B cell (primary cell): ENCODE measurements at regions of chr11 and their contacts with region 1.

Region 1: GRCh38 chr11:64787526-64788320 is 9.4 kb upstream of the SF1 start:
- DNase-seq: peak; percentile 73
- ATAC-seq: peak; percentile 83
- H3K4me3 ChIP-seq: no peak overlapping the region
- H3K4me3 Mint-ChIP-seq: no peak overlapping the region
- H3K27ac ChIP-seq: peak overlapping the region; percentile 25 to 56
- H3K27ac Mint-ChIP-seq: peak overlapping the region; percentile 81
- H3K4me1 ChIP-seq: peaks cover 12 to 14% of the 10 kb centered on the region in 2 donors
- H3K4me1 Mint-ChIP-seq: peaks cover 12% of the 10 kb centered on the region
- H3K27me3 ChIP-seq: no peaks in the 10 kb centered on the region
- H3K27me3 Mint-ChIP-seq: no peaks in the 10 kb centered on the region
- CTCF ChIP-seq: peak; percentile 77

Region 2: GRCh38 chr11:64767344-64768299 is 20.1 kb before region 1 on chr11:
- CTCF ChIA-PET with region 1: interaction called, 13 read pairs
- POLR2A ChIA-PET with region 1: interaction called, 22 read pairs
- intact Hi-C with region 1: no loop called
- DNase-seq: peak; percentile 82
- ATAC-seq: no peak
- H3K4me3 ChIP-seq: no peak overlapping the region
- H3K4me3 Mint-ChIP-seq: peak overlapping the region; percentile 66
- H3K27ac ChIP-seq: peak overlapping the region; percentile 64 to 75
- H3K27ac Mint-ChIP-seq: peak overlapping the region; percentile 92
- H3K4me1 ChIP-seq: peaks cover 85 to 96% of the 10 kb centered on the region in 2 donors
- H3K4me1 Mint-ChIP-seq: peaks cover 91% of the 10 kb centered on the region
- H3K27me3 ChIP-seq: no peaks in the 10 kb centered on the region
- H3K27me3 Mint-ChIP-seq: no peaks in the 10 kb centered on the region
- CTCF ChIP-seq: peak; percentile 90

Region 3: DNA sequence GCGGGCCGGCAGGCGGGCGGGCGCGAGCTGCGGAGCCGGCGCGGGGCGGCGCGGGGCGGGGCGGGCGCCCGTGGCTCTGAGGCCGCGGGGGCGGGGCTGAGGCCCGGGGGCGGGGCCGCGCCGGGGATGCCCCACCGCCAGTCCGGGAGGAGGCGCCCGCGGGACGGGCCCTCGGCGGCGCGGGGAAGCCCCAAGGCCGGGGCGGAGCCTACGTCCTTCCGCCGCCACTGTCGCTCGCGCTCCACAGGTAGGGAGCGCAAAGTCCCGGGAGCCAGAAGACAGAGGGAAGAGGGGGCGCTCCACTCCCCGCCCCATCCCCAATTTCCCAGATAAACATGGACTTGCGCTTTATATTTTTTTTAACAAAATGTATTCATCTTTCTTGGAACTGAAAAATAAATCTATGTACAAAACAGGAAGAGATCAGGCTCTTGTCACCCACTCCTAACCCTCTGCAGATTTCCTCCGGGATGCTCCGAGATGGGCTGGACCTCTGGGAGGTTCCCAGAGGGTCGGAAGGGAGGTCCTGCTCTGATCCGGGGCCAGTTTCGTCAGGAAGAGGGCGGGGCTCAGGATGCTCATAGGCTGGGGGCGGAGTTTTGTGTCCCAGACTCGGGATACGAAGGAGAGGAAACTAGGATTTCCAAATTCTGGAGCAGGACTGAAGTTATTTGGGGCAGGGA is 15.6 kb after region 1 on chr11 and contains the start of gene MAP4K2:
- CTCF ChIA-PET with region 1: interaction called, 73 read pairs
- POLR2A ChIA-PET with region 1: interaction called, 15 read pairs
- intact Hi-C with region 1: loop called (anchors 1 kb)
- DNase-seq: peak; percentile 90
- ATAC-seq: peak; percentile 83
- H3K4me3 ChIP-seq: peak within 1 kb of the TSS; percentile 66 to 96 (median 71)
- H3K4me3 Mint-ChIP-seq: peak within 1 kb of the TSS; percentile 90
- H3K27ac ChIP-seq: peak within 1 kb of the TSS; percentile 74 to 90
- H3K27ac Mint-ChIP-seq: peak within 1 kb of the TSS; percentile 92
- H3K4me1 ChIP-seq: peaks cover 46 to 54% of the 10 kb centered on the region in 2 donors
- H3K4me1 Mint-ChIP-seq: peaks cover 45% of the 10 kb centered on the region
- H3K27me3 ChIP-seq: no peaks in the 10 kb centered on the region
- H3K27me3 Mint-ChIP-seq: no peaks in the 10 kb centered on the region
- CTCF ChIP-seq: no peak
- total RNA-seq, gene MAP4K2: 118 and 122 TPM in 2 replicates

Region 4: DNA sequence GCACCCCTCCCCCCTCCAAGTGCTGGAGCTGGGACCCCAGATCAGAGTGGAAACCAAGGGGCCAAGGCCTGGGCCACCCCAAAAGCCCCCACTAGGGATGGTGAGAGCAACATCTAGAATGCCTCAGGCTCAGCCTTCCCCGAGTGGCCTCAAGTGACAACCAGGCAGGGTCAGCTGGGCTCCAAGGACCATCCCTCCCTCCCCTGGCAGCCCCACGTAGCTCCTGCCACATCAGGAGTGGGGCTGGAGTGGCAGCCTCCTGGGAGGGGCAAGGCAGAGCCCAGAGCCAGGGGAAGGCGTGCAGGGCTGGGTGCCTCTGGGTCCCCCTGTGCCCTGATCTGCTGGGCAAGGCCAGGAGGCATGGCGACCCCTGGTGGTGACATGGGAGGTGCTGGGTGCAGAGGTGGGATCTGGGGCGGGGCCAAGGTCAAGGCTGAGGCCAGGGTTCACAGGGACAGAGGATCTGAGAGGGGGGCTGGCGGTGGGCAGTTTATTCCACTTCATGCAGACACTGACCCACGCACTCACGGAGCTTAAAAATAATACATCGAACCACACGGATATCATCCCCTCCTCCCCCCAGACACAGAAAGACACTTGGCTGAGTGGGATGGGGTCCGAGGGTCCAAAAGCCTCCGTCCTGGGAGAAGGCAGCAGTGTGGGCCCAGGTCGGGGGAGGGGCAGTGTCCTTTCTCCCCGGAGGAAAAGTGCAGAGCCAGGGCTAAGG is 106.5 kb after region 1 on chr11:
- CTCF ChIA-PET with region 1: interaction called, 8 read pairs
- POLR2A ChIA-PET with region 1: interaction called, 4 read pairs
- intact Hi-C with region 1: loop called (anchors 1 kb)
- DNase-seq: peak; percentile 91
- ATAC-seq: peak; percentile 98
- H3K4me3 ChIP-seq: no peak overlapping the region
- H3K4me3 Mint-ChIP-seq: no peak overlapping the region
- H3K27ac ChIP-seq: no peak overlapping the region
- H3K27ac Mint-ChIP-seq: peak overlapping the region; percentile 64
- H3K4me1 ChIP-seq: peaks cover 22 to 30% of the 10 kb centered on the region in 2 donors
- H3K4me1 Mint-ChIP-seq: peaks cover 16% of the 10 kb centered on the region
- H3K27me3 ChIP-seq: no peaks in the 10 kb centered on the region
- H3K27me3 Mint-ChIP-seq: no peaks in the 10 kb centered on the region
- CTCF ChIP-seq: peak; percentile 87

Region 5: GRCh38 chr11:64916775-64917662 is 129.3 kb after region 1 on chr11 and contains the start of gene ATG2A:
- CTCF ChIA-PET with region 1: no interaction called
- POLR2A ChIA-PET with region 1: no interaction called
- intact Hi-C with region 1: no loop called
- DNase-seq: peak; percentile 99
- ATAC-seq: peak; percentile 97
- H3K4me3 ChIP-seq: peak within 1 kb of the TSS; percentile 86 to 96 (median 90)
- H3K4me3 Mint-ChIP-seq: peak within 1 kb of the TSS; percentile 88
- H3K27ac ChIP-seq: peak within 1 kb of the TSS; percentile 44 to 84
- H3K27ac Mint-ChIP-seq: peak within 1 kb of the TSS; percentile 91
- H3K4me1 ChIP-seq: peaks cover 19 to 33% of the 10 kb centered on the region in 2 donors
- H3K4me1 Mint-ChIP-seq: peaks cover 34% of the 10 kb centered on the region
- H3K27me3 ChIP-seq: no peaks in the 10 kb centered on the region
- H3K27me3 Mint-ChIP-seq: no peaks in the 10 kb centered on the region
- CTCF ChIP-seq: no peak
- total RNA-seq, gene ATG2A: 38.6 and 43.4 TPM in 2 replicates